Caco-2 (cell line): ENCODE measurements at regions of chr7 and their contacts with region 1.

Region 1: GRCh38 chr7:8277394-8277982 is 15.5 kb upstream of the ICA1 start:
- DNase-seq: peak in 1 of 2 experiments; percentile 30
- H3K4me3 ChIP-seq: no peak overlapping the region
- H3K4me3 Mint-ChIP-seq: no peak overlapping the region
- H3K27ac Mint-ChIP-seq: no peak overlapping the region
- H3K4me1 ChIP-seq: no peaks in the 10 kb centered on the region
- H3K4me1 Mint-ChIP-seq: peaks cover 1% of the 10 kb centered on the region
- H3K27me3 ChIP-seq: no peaks in the 10 kb centered on the region
- H3K27me3 Mint-ChIP-seq: no peaks in the 10 kb centered on the region
- CTCF ChIP-seq: peak; percentile 38 to 44

Region 2: DNA sequence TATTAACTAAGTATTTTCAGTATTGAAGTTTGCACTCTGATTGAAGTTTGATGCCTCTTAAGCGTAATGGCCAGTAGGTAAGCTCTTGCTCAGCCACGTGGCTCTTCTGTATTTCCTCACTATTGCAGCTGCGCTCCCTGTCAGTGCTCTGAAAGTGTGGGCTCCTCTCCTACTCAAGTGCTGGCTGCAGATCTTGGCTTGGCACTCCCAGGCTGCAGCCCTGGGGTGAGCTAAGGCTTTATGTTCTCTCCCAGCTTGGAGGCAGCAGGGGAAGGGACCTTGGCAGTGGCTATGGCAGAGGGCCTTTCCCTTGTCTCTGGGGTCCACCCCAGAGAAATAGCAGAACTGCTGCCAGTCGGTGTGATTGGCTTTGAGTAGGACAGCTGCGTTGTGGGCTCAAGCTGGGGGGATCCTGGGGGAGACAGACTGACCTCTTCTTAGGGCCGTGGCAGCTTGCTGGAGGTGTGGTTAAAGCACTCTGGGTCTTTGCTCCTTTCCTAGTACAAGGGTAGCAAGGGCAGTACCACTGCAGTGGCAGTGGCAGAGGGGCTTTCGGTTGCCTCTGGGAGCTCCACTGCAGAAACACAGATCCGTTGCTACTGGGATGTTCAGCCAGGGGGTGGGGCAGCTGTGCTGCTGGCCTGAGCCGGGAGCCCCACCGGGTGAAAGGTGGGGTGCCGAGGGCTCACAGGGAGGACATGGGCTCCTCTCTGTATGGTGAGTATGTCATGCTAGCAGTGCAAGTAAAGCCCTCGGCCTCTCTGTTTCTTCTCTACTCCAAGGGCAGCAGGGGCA is 208.4 kb before region 1 on chr7:
- CTCF ChIA-PET with region 1: no interaction called
- POLR2A ChIA-PET with region 1: no interaction called
- intact Hi-C with region 1: no loop called
- DNase-seq: no peak
- H3K4me3 ChIP-seq: no peak overlapping the region
- H3K4me3 Mint-ChIP-seq: no peak overlapping the region
- H3K27ac Mint-ChIP-seq: no peak overlapping the region
- H3K4me1 ChIP-seq: peaks cover 9% of the 10 kb centered on the region; the same call in 1 of the 2 replicates
- H3K4me1 Mint-ChIP-seq: peaks cover 13% of the 10 kb centered on the region
- H3K27me3 ChIP-seq: no peaks in the 10 kb centered on the region
- H3K27me3 Mint-ChIP-seq: no peaks in the 10 kb centered on the region
- CTCF ChIP-seq: no peak

Region 3: GRCh38 chr7:8254667-8255066 is 22.8 kb before region 1 on chr7:
- CTCF ChIA-PET with region 1: no interaction called
- POLR2A ChIA-PET with region 1: no interaction called
- intact Hi-C with region 1: no loop called
- DNase-seq: no peak
- H3K4me3 ChIP-seq: no peak overlapping the region
- H3K4me3 Mint-ChIP-seq: no peak overlapping the region
- H3K27ac Mint-ChIP-seq: no peak overlapping the region
- H3K4me1 ChIP-seq: peaks cover 9% of the 10 kb centered on the region; the same call in 1 of the 2 replicates
- H3K4me1 Mint-ChIP-seq: peaks cover 7% of the 10 kb centered on the region
- H3K27me3 ChIP-seq: no peaks in the 10 kb centered on the region
- H3K27me3 Mint-ChIP-seq: no peaks in the 10 kb centered on the region
- CTCF ChIP-seq: no peak

Region 4: DNA sequence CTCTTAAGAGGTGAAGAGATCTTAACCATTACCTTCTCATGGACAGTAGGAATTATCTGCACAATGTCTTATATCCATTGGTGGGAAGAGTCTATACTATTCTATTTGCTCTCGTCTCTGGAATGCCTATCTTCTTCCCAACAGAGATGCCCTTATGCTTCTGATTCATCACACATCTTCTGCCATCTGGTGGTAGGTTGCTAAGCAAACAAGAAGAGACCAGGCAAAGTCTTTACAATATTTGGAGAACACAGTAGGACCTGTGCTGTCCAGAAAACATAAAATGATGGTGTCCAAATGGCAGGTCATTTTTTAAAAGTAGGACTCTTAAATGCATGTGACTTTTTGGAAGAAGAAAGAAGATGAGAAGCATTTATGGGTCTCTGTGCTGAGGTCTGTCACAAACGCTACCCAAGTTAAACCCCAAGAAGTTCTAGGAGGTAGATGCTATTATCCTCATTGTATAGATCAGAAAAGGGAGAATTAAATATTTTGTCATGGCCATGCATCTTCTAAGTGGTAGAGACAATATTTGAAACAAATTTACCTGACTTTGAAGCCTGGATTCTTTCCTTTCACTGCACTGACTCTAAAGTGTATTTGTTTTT is 88.1 kb after region 1 on chr7:
- CTCF ChIA-PET with region 1: interaction called, 3 read pairs
- POLR2A ChIA-PET with region 1: no interaction called
- intact Hi-C with region 1: loop called (anchors 1 kb)
- DNase-seq: peak; percentile 35 to 47
- H3K4me3 ChIP-seq: no peak overlapping the region
- H3K4me3 Mint-ChIP-seq: no peak overlapping the region
- H3K27ac Mint-ChIP-seq: no peak overlapping the region
- H3K4me1 ChIP-seq: no peaks in the 10 kb centered on the region
- H3K4me1 Mint-ChIP-seq: peaks cover 15% of the 10 kb centered on the region
- H3K27me3 ChIP-seq: no peaks in the 10 kb centered on the region
- H3K27me3 Mint-ChIP-seq: no peaks in the 10 kb centered on the region
- CTCF ChIP-seq: peak; percentile 50 to 66